Heart right ventricle (tissue), 16 donors: ENCODE measurements at regions of chr22 and their contacts with region 1.

Region 1: DNA sequence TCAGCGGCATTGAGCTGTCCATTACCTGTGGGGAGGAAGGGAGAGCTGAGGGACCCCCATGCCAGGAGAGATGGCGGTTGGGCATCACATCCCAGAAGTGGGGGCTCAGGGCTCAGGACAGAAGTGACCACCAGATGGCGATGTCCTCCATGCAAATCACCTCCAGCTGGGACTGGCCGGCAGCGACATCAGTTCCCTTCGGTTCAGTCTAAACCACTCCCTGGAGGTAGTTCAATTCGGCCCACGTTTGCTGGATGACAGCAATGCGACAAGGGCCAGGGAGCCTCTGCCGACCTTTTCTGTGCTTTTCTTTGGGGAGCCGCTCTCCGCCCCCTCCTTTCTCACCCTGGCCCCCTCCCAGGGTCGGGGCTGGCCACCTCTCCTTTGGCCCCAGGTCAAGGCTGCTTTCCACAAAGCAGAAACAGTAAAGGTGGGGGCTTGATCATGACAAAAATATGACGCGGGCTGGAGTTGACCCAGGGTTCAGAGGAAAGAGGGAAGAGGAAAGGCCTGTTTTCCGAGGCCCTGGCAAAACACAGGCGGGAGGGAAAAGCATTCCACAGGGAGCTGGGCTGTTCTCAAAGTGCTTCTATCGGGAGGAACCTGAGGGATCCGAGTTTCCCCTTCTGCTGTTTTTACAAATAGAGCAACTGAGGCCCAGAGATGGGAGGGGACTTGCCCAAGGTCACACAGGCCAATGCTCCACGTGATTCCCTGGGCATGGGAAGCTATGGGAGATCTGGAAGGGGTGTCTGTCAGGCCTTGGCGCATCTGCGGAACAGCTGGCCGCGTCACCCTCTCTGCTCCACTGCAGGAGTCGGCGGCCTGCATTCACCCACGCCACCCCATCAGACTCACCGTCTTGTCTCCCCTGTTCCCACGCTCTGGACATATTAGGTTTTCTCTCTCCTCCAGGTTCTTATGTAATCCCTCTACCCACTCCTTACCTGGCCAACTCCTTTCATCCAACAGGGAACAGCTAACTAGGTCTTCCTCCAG is 54.7 kb downstream of the FBXO7 start:
- DNase-seq: peak; percentile 85 to 92
- ATAC-seq: peak; percentile 66 to 77 (median 70)
- H3K4me3 ChIP-seq: peak overlapping the region in 1 of 10 donors; percentile 13
- H3K27ac ChIP-seq: peak overlapping the region; percentile 76 to 93 (median 82)
- H3K4me1 ChIP-seq: peaks cover 15 to 59% (median 49%) of the 10 kb centered on the region in 9 donors
- H3K27me3 ChIP-seq: no peaks in the 10 kb centered on the region
- CTCF ChIP-seq: peak; percentile 83 to 95 (median 90)

Region 2: GRCh38 chr22:32579509-32580234 is 50.4 kb after region 1 on chr22:
- intact Hi-C with region 1: loop called in 1 of 10 experiments (anchors 5 kb)
- DNase-seq: peak in 1 of 2 donors; percentile 61
- ATAC-seq: peak; percentile 64 to 92 (median 82)
- H3K4me3 ChIP-seq: no peak overlapping the region
- H3K27ac ChIP-seq: peak overlapping the region in 7 of 10 donors; percentile 18 to 67 (median 49)
- H3K4me1 ChIP-seq: peaks cover 0 to 30% (median 7%) of the 10 kb centered on the region in 9 donors
- H3K27me3 ChIP-seq: no peaks in the 10 kb centered on the region
- CTCF ChIP-seq: no peak

Region 3: GRCh38 chr22:32636884-32637283 is 107.6 kb after region 1 on chr22:
- intact Hi-C with region 1: loop called in 3 of 10 experiments (anchors 5 to 10 kb)
- DNase-seq: no peak
- ATAC-seq: no peak
- H3K4me3 ChIP-seq: no peak overlapping the region
- H3K27ac ChIP-seq: no peak overlapping the region
- H3K4me1 ChIP-seq: peaks cover 0 to 16% (median 0%) of the 10 kb centered on the region in 9 donors
- H3K27me3 ChIP-seq: no peaks in the 10 kb centered on the region
- CTCF ChIP-seq: peak in 1 of 9 donors; percentile 3

Region 4: DNA sequence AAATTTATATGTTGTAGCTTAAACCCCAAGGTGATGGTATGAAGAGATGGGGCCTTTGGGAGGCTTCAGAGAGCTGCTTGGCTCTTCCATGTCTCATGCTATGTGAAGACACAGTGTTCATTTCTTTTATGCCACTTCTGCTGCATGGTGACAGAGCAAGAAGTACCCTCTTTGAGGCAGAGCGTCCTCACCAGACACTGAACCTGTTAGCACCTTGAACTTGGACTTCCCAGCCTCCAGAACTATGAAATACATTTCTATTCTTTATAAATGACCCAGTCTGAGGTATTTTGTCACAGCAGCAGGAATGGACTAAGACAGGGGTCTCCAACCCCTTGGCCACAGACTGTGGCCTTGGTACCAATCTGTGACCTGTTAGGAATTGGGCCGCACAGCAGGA is 125.8 kb after region 1 on chr22:
- intact Hi-C with region 1: loop called in 7 of 10 experiments (anchors 2 to 10 kb)
- DNase-seq: no peak
- ATAC-seq: no peak
- H3K4me3 ChIP-seq: no peak overlapping the region
- H3K27ac ChIP-seq: no peak overlapping the region
- H3K4me1 ChIP-seq: peaks cover 0 to 7% (median 1%) of the 10 kb centered on the region in 9 donors
- H3K27me3 ChIP-seq: no peaks in the 10 kb centered on the region
- CTCF ChIP-seq: no peak

Region 5: DNA sequence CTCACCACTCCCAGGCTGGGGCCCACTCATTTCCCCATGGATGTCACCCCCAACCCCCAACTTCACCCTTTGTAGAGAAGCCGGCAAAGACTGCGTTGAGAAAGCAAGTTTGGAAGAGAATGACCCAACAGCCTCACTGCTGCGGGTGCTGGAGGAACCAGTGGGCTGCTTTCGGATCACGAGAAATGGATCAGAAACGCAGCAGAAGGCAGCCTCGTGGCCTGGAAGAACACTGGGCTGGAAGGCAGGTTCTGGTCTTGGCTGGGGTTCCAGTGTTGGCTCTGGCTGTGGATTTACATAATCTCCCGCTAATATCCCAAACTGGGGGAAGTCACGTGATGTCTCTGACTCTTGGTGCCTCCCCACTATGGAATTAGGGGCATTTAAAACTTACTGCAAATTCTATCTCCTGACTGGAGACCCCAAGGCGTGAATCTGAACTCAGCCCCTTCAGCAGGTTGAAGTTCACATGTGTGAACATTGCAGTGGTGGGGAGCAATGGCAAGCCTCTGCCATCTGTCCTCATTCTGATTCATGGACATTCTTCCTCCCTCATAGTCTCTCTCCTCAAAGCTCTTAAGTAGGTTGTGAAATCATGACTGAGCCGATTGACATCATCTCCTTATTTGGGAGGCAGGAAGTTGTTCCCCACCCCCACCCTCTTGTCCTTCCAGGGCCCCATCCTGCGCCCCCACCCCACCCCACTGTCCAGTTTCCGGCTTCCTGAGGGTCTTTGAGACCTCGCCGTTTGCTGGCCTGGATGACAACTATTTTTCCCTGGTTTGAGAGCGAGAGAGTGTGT is 235.2 kb after region 1 on chr22:
- intact Hi-C with region 1: loop called in 2 of 10 experiments (anchors 10 kb)
- DNase-seq: peak; percentile 47 to 65
- ATAC-seq: peak; percentile 50 to 83 (median 70)
- H3K4me3 ChIP-seq: no peak overlapping the region
- H3K27ac ChIP-seq: peak overlapping the region; percentile 50 to 88 (median 75)
- H3K4me1 ChIP-seq: peaks cover 14 to 50% (median 46%) of the 10 kb centered on the region in 9 donors
- H3K27me3 ChIP-seq: peaks cover 0 to 13% (median 0%) of the 10 kb centered on the region in 7 donors
- CTCF ChIP-seq: no peak

Region 6: GRCh38 chr22:32985899-32986765 is 456.8 kb after region 1 on chr22:
- intact Hi-C with region 1: loop called in 3 of 10 experiments (anchors 2 to 5 kb)
- DNase-seq: peak in 1 of 2 donors; percentile 86
- ATAC-seq: peak; percentile 94 to 98 (median 97)
- H3K4me3 ChIP-seq: no peak overlapping the region
- H3K27ac ChIP-seq: no peak overlapping the region
- H3K4me1 ChIP-seq: peaks cover 0 to 11% (median 8%) of the 10 kb centered on the region in 9 donors
- H3K27me3 ChIP-seq: no peaks in the 10 kb centered on the region
- CTCF ChIP-seq: peak; percentile 83 to 95 (median 91)